ENCODE measurements at regions of chr11 and their contacts with region 1.

Region 1: GRCh38 chr11:45917623-45918330 is at the start of gene PEX16:
- DNase-seq: peak; percentile 97
- H3K4me3 Mint-ChIP-seq: peak within 1 kb of the TSS; percentile 93
- H3K27ac Mint-ChIP-seq: peak within 1 kb of the TSS; percentile 99
- H3K4me1 Mint-ChIP-seq: peaks cover 43% of the 10 kb centered on the region
- H3K27me3 Mint-ChIP-seq: peaks cover 6% of the 10 kb centered on the region
- total RNA-seq, gene PEX16: 47.1 to 51.1 TPM

Region 2: DNA sequence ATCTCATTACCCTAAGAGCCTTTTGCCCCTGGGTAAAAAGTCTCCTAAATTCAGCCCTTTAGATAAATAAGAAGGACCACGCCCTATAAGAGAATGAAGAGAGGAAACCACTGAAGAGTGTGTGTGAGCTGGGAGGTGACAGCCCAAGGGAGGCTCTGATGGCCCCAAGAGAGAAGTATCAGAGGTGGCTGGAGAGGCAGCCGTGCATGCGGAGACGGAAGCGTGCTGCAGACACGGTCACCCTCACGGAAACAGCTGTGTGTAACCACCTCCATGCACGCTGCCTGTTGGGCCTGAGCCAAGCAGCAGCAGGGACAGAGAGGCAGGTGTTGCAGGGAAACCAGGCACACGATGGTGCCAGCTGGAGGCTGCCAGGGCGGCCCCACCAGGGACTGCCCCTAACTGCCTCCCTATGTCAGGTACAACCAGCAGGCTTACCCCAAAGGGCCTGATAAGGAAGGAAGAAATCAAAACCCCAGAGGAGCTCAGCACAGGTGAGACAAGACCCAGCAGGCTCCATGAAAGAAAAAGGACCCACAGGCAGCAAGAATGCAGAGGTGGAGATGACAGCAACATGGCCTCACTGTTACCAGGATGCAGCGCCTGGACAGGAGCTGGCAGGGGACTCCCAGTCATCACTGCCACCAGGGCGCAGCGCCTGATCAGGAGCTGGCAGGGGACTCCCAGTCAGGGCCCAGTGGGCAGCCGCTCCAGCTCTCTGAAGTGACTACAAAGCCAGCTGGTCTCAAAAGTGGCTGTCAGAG is 12.4 kb after region 1 on chr11:
- CTCF ChIA-PET with region 1: interaction called, 10 read pairs
- POLR2A ChIA-PET with region 1: interaction called, 3 read pairs
- DNase-seq: peak; percentile 55
- H3K4me3 Mint-ChIP-seq: peak overlapping the region; percentile 29
- H3K27ac Mint-ChIP-seq: peak overlapping the region; percentile 90
- H3K4me1 Mint-ChIP-seq: peaks cover 29% of the 10 kb centered on the region
- H3K27me3 Mint-ChIP-seq: no peaks in the 10 kb centered on the region